GM10248 (cell line): ENCODE measurements at regions of chr5 and their contacts with region 1.

Region 1: GRCh38 chr5:102681407-102681983 is 73.6 kb upstream of the PAM start:
- DNase-seq: peak; percentile 52
- CTCF ChIP-seq: peak; percentile 85

Region 2: DNA sequence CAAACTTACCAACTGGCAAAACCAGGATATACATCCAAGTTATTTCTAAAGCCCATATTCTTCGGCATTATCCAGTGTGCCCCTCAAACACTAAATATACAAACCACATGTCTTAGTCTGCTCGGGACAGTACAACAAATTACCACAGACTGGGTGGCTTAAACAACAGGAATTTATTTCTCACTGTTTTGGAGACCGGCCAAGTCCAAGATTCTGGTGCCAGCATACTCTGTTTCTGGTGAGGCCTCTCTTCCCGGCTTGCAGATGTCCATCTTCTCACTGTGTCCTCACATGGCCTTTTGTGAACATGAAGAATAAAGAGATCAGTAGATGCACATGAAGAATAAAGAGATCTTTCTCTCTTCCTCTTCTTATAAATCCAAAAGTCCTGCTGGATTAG is 169.8 kb before region 1 on chr5:
- CTCF ChIA-PET with region 1: no interaction called
- POLR2A ChIA-PET with region 1: no interaction called
- DNase-seq: no peak
- CTCF ChIP-seq: no peak

Region 3: DNA sequence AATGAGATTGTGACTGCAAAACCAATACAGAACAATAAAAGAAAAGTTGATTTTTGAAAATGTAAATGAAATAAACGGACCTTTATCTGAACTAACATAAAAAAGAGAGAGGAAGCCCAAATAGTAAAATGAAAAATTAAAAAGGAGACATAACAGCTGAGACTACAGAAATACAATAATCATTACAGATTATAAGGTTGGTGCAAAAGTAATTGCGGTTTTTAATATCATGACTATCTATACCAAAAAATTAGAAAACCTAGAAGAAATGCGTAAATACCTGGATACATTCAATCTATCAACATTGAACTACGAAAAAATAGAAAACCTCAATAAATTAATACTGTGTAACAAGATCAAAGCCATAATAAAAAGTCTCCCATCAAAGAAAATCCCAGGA is 110.7 kb before region 1 on chr5:
- CTCF ChIA-PET with region 1: no interaction called
- POLR2A ChIA-PET with region 1: no interaction called
- DNase-seq: no peak
- CTCF ChIP-seq: no peak

Region 4: GRCh38 chr5:102663749-102664530 is 17.6 kb before region 1 on chr5:
- CTCF ChIA-PET with region 1: interaction called, 26 read pairs
- POLR2A ChIA-PET with region 1: no interaction called
- DNase-seq: no peak
- CTCF ChIP-seq: no peak

Region 5: DNA sequence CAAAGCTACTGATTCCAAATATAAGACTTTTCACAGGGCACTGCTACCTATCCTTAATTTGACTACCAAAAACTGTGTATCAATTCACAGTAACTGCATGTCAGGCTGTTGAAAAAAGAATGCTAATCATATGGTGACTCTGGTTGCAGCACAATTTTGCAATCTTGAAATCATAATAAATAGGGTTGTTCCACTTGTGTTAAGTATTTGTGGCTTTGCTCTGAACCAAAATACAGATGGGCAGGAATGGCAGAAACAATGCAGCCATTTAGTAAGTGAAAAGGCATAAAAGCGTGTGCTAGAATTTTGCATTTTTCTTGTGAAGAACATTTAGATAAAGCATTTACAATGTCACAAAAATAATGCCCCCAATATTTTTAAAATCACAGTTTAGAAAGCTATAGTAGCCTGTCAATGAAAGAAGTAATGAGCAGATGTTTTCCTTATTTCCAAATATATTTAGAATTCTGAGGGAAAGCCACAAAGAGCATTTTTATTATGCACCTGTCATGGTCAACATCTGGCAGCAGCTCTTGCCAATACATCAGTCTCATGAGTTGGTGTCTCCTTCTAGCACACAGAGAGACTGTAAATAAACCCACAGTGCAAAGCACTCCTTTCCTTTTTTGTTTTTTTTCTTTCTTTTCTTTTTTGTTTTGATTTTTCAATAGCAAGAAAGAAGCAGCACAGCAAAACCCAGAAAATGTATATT is 18.8 kb after region 1 on chr5:
- CTCF ChIA-PET with region 1: interaction called, 25 read pairs
- POLR2A ChIA-PET with region 1: no interaction called
- DNase-seq: no peak
- CTCF ChIP-seq: no peak

Region 6: DNA sequence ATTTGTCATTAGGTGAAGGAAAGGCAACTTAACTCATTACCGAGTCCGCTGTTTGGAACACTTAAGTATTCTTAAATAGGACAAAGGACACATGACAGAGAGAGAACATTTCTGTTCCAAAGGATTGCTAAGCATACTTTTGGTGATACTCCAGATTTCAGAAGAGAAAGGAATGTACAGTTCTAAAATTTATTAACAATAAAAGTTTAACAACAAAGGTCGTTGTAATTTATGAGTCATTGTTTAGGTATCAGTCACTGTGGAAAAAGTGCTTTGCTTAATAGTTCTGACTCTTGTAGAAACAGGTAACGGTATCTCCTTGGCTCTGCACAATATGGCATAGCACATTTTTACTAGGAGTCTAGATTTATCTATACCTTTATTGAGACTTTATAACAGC is 37.3 kb after region 1 on chr5:
- CTCF ChIA-PET with region 1: interaction called, 12 read pairs
- POLR2A ChIA-PET with region 1: no interaction called
- DNase-seq: no peak
- CTCF ChIP-seq: no peak

Region 7: DNA sequence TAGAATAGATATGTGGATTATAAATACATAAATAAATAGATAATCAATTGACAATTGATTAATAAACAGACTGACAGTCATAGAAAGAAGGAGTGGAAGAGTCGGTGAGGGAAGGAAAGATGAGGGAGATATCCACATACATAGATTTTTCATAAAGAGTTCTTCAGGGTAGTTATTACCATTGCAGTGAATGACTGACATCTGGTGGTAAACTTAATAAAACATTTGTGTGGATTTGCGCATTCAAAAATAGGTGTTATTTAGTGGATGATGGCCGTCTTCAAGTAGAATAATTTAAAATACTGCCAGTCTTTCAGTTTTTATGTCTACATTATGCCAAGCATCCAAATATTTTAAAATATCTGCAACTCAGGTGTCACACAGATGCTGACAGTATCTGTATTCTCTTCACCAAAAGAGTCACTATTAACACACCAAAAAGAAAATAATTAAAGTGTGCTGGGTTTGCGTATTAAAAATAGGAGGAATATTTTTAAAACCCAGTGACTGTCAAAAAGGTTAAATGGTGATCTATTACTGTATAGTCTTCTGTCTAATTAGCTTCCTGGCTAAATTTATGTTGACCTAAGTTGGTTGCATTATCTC is 359.7 kb after region 1 on chr5:
- CTCF ChIA-PET with region 1: interaction called, 21 read pairs
- POLR2A ChIA-PET with region 1: no interaction called
- DNase-seq: peak; percentile 16
- CTCF ChIP-seq: peak; percentile 46

Region 8: DNA sequence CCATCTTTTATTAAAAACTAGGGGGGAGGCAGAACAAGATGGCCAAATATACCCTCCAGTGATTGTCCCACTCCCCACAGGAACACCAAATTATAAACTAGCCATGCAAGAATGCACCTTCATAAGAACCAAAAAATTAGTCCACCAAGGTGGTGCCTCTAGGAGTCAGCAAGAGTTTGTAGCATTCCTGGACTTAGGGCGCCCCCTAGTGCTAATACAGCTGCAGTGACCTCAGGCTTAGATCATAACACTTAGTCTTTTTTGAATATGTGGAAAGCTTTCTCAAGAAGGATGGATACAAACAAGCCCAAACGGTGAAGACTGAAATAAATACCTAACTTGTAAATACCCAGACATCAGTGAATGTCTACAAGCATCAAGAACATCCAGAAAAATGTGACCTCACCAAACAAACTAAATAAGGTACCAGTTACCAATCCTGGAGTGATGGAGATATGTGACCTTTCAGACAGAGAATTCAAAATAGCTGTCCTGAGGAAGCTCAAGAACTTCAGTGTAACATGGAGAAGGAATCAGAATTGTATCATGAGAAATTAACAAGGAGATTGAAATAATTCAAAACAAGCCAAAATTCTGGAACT is 457.9 kb after region 1 on chr5:
- CTCF ChIA-PET with region 1: interaction called, 38 read pairs
- POLR2A ChIA-PET with region 1: no interaction called
- DNase-seq: peak; percentile 74
- CTCF ChIP-seq: peak; percentile 89